Right ventricle myocardium inferior (tissue), 1 donor: ENCODE measurements at regions of chr3 and their contacts with region 1.

Region 1: DNA sequence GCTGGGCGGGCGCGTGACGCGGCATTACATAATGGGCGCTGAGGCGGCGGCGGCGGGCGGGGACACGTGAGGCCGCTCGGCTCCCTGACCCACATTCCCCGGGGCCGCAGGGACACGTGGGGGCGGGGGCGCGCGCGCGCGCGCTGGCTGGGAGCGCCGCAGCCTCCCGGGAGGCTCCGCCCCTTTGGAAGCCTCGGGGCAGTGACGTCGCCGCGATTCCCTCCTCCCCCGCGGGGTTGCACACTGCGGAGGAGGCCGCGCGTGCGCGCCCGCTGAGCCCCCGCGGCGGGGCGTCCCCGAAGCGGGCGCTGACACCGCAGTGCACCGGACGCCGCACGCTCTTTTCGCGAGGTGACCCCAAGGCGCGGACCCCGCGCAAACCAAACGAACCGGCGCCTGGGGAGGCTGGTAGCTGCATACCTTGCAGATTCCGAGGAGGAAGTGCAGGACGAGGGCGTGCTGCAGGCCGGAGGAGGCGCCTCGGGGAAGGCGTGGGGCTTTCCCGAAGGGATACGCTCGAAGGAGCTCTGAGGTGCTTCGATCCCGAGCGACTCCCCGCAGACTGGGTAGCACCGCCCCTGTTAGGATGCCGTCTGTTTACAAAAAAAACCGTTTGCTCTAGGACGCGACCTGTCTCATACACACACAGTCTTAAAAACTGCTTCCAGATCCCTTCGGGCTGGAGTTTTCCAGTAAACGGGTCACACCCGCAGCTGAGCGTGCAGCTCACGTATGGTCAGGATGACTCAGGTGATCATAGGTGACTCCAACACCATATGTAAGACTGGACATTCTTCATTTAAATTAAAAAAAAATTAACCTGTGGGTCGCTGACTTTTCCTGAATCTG is 1.0 kb downstream of the NR1D2 start:
- DNase-seq: peak; percentile 100
- ATAC-seq: peak; percentile 93

Region 2: DNA sequence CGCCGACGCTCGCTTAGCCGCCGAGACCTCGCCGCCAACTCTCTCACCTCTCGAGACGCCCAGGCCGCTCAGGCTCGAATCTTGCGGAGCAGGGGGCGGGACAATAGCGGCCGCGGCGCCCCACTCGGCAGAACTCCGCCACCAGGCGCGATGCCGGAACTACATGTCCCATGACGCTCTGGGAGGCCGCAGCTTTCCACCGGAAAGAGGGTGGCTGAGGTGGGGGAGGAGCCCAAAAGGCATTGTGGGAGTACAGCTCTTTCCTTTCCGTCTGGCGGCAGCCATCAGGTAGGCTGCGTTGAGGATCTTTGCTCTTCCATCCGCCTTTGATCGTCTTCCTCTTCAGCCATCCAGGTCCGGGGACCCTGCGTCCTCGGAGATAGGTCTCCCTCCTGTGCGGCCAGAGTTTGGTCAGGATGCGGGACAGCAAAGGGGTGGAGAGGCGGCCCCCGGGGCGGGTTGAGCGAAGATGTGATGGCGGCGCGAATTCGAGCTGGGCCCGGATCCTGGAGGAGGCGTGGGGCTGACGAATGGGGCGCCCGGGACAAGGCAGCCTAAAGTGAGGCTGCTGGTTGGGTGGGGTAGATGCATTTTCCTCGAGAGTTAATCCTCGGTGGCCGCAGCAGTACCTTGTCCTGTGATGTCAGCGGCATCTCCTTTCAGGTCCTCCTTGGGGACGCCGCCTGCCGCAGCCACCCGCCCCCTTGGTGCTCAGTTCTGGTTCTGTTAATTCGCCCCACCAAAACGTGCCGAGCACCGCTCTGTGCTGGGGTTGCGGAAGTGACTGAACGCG is 29.0 kb before region 1 on chr3 and contains the starts of genes NKIRAS1 and RPL15:
- intact Hi-C with region 1: loop called (anchors 1 kb)
- DNase-seq: peak; percentile 98
- ATAC-seq: peak; percentile 99
- total RNA-seq, gene NKIRAS1: 20.3 TPM
- total RNA-seq, gene RPL15: 1,001 TPM